ENCODE measurements at regions of chr6 and their contacts with region 1.

Region 1: DNA sequence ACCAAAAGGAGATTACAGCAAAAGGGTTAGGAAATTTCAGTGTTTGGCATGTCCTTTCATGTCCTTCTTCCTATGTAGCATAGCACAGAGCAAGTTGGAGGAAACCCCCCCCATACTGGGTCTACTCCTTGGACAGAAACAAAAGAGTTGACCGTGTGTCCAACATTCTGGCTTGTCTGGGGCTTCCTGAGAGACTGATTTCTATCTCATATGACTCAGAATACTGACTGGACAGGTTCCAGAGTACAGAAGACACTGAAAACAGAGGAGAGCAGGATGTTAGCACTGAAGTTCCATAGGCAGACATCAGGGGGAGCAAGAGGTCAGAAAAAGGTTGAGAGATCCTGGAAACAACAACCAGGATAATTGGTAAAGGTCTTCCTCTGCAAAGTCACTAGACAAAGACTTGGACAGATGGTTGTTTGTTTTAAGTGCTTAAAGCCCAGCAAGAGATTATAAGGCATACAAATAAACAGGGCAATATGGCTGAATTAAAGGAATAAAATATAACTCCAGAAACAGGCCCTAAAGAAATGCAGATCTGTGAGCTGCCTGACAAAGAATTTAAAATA is 48.4 kb downstream of the USP49 start:
- DNase-seq: peak; percentile 69
- H3K4me3 ChIP-seq: no peak overlapping the region
- CTCF ChIP-seq: peak; percentile 71

Region 2: GRCh38 chr6:41836022-41836659 is 10.6 kb before region 1 on chr6:
- CTCF ChIA-PET with region 1: interaction called, 11 read pairs
- POLR2A ChIA-PET with region 1: no interaction called
- DNase-seq: no peak
- H3K4me3 ChIP-seq: no peak overlapping the region
- CTCF ChIP-seq: no peak

Region 3: DNA sequence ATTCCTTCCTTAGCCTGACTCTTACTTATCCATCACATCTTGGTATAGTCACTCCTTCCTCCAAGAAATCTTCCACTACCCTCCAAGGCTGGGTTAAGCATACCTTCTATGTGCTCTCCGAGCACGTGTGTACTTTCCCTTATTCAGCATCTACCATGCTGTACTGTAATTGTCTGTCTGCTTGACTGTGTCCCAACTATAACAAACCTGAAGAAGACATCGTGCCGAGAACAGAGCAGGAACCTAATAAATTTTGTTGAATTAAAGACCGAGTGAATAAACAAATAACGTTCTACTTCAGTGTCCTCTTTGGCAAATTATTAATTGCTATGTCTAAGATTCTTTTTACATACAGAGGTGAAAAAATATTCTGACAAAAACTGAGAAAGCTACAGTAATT is 12.6 kb after region 1 on chr6:
- CTCF ChIA-PET with region 1: interaction called, 30 read pairs
- POLR2A ChIA-PET with region 1: no interaction called
- DNase-seq: no peak
- H3K4me3 ChIP-seq: no peak overlapping the region
- CTCF ChIP-seq: no peak

Region 4: DNA sequence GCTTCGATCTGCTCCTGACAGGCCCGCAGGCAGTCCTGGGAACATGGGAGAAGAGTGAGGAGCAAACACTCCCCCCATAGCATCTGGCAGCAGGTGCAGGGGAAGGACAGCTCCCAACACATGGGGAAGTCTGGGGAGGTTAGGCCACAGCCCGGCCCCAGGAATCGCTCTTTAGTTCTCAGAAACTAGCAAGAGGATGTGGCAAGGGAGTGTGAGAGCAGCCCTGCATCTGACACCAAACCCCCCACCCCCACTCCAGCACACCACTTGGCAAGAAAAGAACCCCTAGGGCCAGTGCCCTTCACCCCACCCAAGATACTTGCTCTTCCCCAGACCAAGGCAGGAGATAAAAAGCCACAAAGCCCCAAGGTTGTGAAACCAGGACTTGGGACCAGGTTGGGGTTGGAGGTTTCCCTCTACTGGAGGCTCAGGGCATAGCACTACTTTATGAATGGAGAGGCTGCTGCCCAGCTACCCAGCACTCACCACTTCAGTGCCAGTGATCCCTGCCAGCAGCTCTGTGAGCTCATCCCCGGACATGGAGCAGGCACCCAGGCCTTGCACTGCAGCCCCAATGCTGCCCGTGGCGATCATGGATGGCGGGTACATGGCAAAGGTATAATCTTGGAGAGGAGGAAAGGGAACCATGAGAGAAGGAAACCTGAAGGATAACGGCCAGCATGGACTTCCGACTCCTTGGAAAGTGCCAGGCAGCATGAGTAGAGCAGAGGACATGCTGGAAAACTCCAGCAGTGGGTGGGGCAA is 89.5 kb after region 1 on chr6:
- CTCF ChIA-PET with region 1: interaction called, 14 read pairs
- POLR2A ChIA-PET with region 1: no interaction called
- DNase-seq: peak; percentile 65
- H3K4me3 ChIP-seq: no peak overlapping the region
- CTCF ChIP-seq: peak; percentile 83

Measured in AG04449 (cell line).